Gastrocnemius medialis (tissue), 4 donors: ENCODE measurements at regions of chr7 and their contacts with region 1.

Region 1: DNA sequence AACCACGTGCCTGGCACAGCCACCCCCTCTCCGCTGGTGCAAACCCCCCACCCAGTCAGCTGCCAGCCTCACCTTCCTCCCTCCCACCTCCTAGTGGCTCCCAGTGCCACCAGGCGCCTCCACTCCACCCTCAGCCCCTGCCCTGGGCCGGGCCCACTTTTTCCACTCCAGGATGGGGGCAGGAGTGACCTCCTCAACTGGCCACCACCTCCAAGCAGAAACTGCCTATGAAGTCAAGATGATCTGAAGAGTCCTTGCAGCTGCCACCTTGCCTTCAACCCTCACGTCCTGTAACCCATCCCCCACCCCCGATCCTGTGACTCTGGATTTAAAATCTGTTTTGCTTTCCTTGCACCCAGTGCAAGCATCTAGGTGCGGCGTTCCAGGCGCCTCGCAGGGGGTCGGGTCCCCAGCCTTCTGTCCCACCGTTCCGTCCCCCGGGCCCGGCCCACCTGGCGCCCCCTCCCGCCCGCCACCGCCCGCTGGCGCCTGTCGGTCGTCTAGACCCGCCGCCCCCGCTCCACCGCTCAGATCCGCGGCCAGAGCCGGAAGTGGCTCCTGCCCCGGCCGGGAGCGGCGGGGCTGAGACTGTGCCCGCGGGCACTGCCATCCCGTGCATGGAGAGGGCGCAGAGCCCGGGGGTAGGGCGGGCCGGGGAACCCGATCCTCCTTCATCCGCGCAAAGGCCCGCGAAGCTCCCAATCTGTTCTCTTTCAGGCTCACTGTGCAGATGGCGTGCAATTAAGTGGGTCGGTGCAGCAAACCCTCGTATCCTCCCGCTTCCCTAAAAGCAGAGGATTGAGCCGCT is 51.2 kb upstream of the GTF2I start:
- DNase-seq: peak; percentile 24 to 70
- ATAC-seq: peak; percentile 24 to 52
- H3K4me3 ChIP-seq: peak overlapping the region; percentile 45 to 60 (median 52)
- H3K27ac ChIP-seq: peak overlapping the region; percentile 70 to 88 (median 82)
- H3K4me1 ChIP-seq: peaks cover 14 to 16% of the 10 kb centered on the region in 2 donors
- H3K27me3 ChIP-seq: no peaks in the 10 kb centered on the region
- CTCF ChIP-seq: peak in 1 of 5 experiments; percentile 20
- POLR2A ChIP-seq: no peak

Region 2: DNA sequence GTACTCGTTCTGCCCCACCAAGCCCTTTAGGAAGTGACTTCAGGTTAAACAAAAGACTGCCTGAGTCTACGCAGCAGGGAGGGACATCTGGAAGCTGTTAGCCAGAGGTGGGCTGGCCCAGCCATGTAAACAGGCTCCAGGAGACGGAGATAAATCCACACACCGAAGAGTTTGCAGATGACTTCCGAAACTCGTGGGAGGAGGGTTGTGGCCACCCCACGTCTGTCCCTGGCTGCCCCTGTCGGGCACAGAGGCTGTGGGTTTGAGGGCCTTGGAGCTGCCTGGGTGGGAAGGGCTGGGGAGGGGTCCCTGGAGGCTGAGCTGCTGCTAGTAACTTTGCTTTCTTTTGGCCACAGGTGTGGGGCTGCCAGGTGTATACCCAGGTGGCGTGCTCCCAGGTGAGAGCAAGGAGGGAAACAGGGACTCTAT is 562.8 kb before region 1 on chr7:
- in situ Hi-C with region 1: no loop called
- intact Hi-C with region 1: no loop called
- DNase-seq: no peak
- ATAC-seq: no peak
- H3K4me3 ChIP-seq: no peak overlapping the region
- H3K27ac ChIP-seq: no peak overlapping the region
- H3K4me1 ChIP-seq: peaks cover 16 to 17% of the 10 kb centered on the region in 2 donors
- H3K27me3 ChIP-seq: no peaks in the 10 kb centered on the region
- CTCF ChIP-seq: no peak
- POLR2A ChIP-seq: no peak

Region 3: DNA sequence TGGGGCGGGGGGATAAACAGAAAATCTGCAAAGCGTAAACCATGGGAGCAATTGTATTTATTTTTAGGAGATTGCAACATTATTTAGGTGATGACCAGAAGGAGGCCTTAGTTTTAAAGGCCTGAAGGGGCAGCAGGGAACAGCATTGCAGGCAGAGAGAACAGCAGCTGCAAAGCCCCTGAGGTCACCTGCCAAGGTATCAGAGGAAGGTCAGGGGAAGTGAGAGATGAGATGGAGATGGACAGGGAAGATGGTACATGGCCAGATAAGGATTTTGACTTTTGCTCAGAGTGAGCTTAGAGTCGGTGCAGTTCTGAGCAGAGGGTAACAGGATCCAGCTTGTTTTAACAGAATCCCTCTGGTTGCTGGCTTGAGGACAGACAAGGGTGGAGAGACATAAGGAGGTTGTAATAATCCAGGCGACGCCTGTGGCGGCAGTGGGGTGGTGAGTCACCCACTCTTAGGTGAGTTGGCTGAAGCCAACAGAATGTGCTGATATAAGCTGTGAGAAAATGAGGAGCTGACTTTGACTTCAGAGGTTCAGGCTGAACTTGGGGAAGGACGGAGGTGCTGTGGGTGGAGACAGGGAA is 31.1 kb before region 1 on chr7:
- in situ Hi-C with region 1: no loop called
- intact Hi-C with region 1: no loop called
- DNase-seq: no peak
- ATAC-seq: peak in 1 of 2 donors; percentile 21
- H3K4me3 ChIP-seq: no peak overlapping the region
- H3K27ac ChIP-seq: peak overlapping the region in 1 of 4 donors; percentile 34
- H3K4me1 ChIP-seq: peaks cover 0 to 9% of the 10 kb centered on the region in 2 donors
- H3K27me3 ChIP-seq: no peaks in the 10 kb centered on the region
- CTCF ChIP-seq: no peak
- POLR2A ChIP-seq: no peak

Region 4: DNA sequence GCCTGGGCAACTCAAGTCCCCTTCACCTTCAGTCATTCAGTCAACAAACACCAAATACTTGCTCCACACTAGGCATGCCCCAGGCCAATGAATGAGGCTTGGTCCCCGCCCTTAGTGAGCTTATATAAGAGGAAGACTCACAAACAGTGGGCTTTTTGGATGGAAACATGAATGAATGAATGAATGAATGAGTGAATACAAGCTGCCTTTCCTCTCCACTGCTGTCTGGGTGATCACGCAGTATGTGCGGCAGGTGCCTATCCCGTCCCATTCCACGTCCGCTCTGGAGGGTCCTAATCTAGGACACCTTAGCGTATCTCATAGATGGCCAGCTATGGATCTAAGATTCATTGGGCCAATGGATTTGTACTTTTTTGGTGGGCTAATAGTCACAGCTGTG is 31.4 kb after region 1 on chr7:
- in situ Hi-C with region 1: no loop called
- intact Hi-C with region 1: loop called (anchors 5 kb)
- DNase-seq: no peak
- ATAC-seq: no peak
- H3K4me3 ChIP-seq: no peak overlapping the region
- H3K27ac ChIP-seq: peak overlapping the region; percentile 49 to 94 (median 90)
- H3K4me1 ChIP-seq: peaks cover 17% of the 10 kb centered on the region in 2 donors
- H3K27me3 ChIP-seq: no peaks in the 10 kb centered on the region
- CTCF ChIP-seq: no peak
- POLR2A ChIP-seq: no peak

Region 5: GRCh38 chr7:74709880-74710671 is 103.8 kb after region 1 on chr7:
- in situ Hi-C with region 1: loop called in 1 of 4 experiments (anchors 25 kb)
- intact Hi-C with region 1: no loop called
- DNase-seq: no peak
- ATAC-seq: no peak
- H3K4me3 ChIP-seq: no peak overlapping the region
- H3K27ac ChIP-seq: no peak overlapping the region
- H3K4me1 ChIP-seq: no peaks in the 10 kb centered on the region
- H3K27me3 ChIP-seq: no peaks in the 10 kb centered on the region
- CTCF ChIP-seq: no peak
- POLR2A ChIP-seq: no peak